ENCODE measurements at regions of chr3 and their contacts with region 1.

Region 1: DNA sequence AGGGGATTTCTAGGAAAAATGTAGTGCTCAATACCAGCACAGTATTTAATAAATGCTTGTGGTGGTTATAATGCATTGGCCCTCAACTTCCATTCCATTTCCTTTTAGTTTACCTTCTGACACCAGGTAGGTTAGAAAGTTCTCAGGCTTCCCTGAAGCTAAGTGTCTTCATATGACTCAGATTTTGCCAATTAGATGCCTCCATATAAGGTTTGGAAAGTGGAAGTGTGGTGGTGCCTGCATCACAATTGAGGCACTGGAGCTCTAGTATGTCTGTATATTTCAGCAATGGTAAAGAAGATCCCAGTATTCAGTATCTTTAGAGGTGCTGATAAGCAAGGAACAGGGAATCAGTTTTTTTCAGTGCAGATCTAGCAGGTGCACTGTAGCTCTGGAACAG is 18.3 kb downstream of the XRN1 start:
- DNase-seq: no peak
- ATAC-seq: no peak
- H3K4me3 ChIP-seq: no peak overlapping the region
- H3K27ac ChIP-seq: no peak overlapping the region
- H3K4me1 ChIP-seq: peaks cover 0 to 16% (median 10%) of the 10 kb centered on the region in 9 donors
- H3K27me3 ChIP-seq: no peaks in the 10 kb centered on the region
- CTCF ChIP-seq: no peak

Region 2: DNA sequence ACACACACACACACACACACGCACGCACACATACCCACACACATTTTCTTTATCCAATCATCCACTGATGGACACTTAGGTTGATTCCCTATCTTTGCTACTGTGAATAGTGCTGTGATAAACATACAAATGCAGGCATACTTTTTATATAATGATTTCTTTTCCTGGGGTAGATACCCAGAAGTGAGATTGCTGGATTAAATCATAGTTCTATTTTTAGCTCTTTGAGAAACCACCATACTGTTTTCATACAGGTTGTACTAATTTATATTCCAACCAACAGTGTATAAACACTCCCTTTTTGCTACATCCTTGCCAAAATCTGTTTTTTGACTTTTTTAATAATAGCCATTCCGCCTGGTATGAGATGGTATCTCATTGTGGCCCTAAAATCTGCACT is 109.7 kb before region 1 on chr3:
- intact Hi-C with region 1: loop called in 1 of 10 experiments (anchors 10 kb)
- DNase-seq: no peak
- ATAC-seq: no peak
- H3K4me3 ChIP-seq: no peak overlapping the region
- H3K27ac ChIP-seq: no peak overlapping the region
- H3K4me1 ChIP-seq: no peaks in the 10 kb centered on the region
- H3K27me3 ChIP-seq: no peaks in the 10 kb centered on the region
- CTCF ChIP-seq: no peak

Region 3: DNA sequence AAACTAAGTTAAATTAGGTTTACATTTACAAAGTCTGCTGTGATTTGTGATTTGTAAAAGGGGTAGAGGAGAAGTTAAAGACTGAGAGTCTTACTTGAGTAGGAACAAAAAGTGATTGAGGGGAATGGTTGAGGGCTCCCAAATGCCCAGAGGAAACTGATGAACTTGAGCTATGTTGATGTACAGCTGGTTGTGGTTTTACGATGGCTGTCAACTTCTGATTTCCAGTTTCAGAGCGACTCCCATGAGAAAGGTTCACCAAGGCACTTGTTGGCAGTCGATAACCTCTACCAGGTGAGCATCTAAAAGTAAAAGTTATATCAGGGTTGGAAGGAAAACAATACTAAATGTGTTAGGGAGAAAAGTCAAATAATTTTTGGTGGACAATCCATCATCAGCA is 72.8 kb before region 1 on chr3:
- intact Hi-C with region 1: loop called in 1 of 10 experiments (anchors 10 kb)
- DNase-seq: no peak
- ATAC-seq: no peak
- H3K4me3 ChIP-seq: no peak overlapping the region
- H3K27ac ChIP-seq: no peak overlapping the region
- H3K4me1 ChIP-seq: no peaks in the 10 kb centered on the region
- H3K27me3 ChIP-seq: no peaks in the 10 kb centered on the region
- CTCF ChIP-seq: no peak

Region 4: DNA sequence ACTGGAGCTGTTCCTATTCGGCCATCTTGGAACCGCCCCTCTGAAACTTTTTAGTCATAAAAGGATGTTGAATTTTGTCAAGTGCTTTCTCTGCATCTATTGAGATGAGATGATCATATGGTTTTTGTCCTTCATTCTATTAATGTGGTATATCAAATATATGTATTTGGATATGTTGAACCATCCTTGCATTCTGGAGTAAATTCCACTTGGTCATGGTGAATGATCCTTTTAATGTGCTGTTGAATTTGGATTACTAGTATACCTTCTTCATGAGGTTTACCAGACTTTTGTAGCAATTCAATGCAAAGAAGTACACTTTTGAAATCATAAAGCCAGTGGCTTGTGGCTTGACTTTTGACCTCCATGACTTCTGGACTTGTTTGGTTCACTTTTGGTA is 51.6 kb after region 1 on chr3:
- intact Hi-C with region 1: no loop called
- DNase-seq: no peak
- ATAC-seq: no peak
- H3K4me3 ChIP-seq: no peak overlapping the region
- H3K27ac ChIP-seq: no peak overlapping the region
- H3K4me1 ChIP-seq: no peaks in the 10 kb centered on the region
- H3K27me3 ChIP-seq: no peaks in the 10 kb centered on the region
- CTCF ChIP-seq: no peak